A673 (cell line): ENCODE measurements at regions of chr20 and their contacts with region 1.

Region 1: GRCh38 chr20:11941593-11942246 is 24.0 kb downstream of the BTBD3 start:
- DNase-seq: no peak
- H3K4me3 ChIP-seq: no peak overlapping the region
- H3K27ac ChIP-seq: no peak overlapping the region
- H3K4me1 ChIP-seq: no peaks in the 10 kb centered on the region
- H3K27me3 ChIP-seq: no peaks in the 10 kb centered on the region
- CTCF ChIP-seq: no peak

Region 2: GRCh38 chr20:11686820-11687543 is 254.7 kb before region 1 on chr20:
- CTCF ChIA-PET with region 1: no interaction called
- POLR2A ChIA-PET with region 1: no interaction called
- intact Hi-C with region 1: no loop called
- DNase-seq: peak; percentile 20
- H3K4me3 ChIP-seq: peak overlapping the region; percentile 15
- H3K27ac ChIP-seq: no peak overlapping the region
- H3K4me1 ChIP-seq: no peaks in the 10 kb centered on the region
- H3K27me3 ChIP-seq: peaks cover 33% of the 10 kb centered on the region
- CTCF ChIP-seq: no peak

Region 3: DNA sequence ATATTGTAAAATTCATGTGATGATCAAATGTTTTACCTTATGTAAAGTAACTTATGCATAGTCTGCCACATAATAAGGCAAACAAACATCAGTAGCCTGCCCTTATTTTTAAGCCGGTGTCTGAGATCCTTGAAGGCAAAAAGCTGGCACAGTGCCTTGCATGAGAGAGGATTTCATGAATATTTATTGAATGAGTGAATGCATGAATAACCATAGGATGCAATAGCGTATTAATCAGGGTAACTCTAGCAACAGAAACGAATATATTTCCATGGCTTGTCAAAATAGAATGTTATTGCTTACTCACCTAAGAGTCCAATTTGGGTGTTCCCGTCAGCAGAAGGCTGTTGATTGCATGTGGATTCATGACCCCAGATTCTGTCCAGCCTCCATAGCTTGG is 10.9 kb after region 1 on chr20:
- CTCF ChIA-PET with region 1: no interaction called
- POLR2A ChIA-PET with region 1: interaction called, 20 read pairs
- intact Hi-C with region 1: no loop called
- DNase-seq: peak; percentile 68
- H3K4me3 ChIP-seq: no peak overlapping the region
- H3K27ac ChIP-seq: no peak overlapping the region
- H3K4me1 ChIP-seq: no peaks in the 10 kb centered on the region
- H3K27me3 ChIP-seq: no peaks in the 10 kb centered on the region
- CTCF ChIP-seq: no peak